Activated CD4-positive, alpha-beta T cell treated with anti-CD3 and anti-CD28 coated beads for 36 hours (primary cell): ENCODE measurements at regions of chr1 and their contacts with region 1.

Region 1: GRCh38 chr1:65235867-65236805 is 73.2 kb upstream of the DNAJC6 start:
- DNase-seq: no peak
- ATAC-seq: no peak
- H3K4me3 Mint-ChIP-seq: no peak overlapping the region
- H3K27ac Mint-ChIP-seq: no peak overlapping the region
- H3K4me1 Mint-ChIP-seq: peaks cover 10% of the 10 kb centered on the region
- H3K27me3 Mint-ChIP-seq: peaks cover 12% of the 10 kb centered on the region

Region 2: DNA sequence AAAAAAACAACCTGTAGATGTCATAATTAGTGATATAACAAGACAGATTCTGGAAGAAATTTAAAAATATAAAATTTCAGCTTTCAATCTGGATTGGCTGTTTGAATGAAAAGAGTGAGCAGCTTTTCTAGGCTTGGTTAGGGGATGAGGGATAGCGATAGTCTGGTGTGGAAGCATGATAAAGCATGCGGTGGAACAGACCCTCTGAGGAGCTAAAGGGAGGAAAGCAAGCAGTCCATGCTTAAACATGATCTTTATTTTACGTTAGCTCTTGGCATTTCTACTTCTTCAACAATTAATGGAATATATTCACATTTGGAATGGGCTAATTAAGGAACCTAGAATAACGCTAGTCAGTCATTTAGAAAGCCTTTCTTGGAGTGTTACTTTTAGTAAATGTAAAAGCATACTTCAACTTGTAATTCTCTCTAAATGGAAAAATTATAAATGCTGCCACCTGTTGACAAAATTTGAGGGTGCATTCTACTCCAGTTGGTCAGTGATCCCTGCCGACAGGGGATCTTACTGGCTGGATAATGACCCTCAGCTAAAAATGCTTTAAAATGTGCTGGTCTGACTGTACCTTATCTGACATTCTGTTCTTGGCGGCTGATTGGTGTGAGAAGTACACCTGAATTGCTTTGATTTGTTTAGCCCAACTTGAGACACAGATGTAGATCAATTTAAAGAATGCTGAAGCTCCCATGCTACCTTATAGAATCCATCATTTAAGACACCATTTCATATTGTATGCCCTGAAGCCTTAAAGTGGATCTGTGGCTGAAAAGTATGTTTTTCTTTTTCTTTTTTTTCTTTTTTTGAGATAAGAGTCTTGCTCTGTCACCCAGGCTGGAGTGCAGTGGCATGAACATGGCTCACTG is 26.9 kb before region 1 on chr1:
- CTCF ChIA-PET with region 1: interaction called, 13 read pairs
- POLR2A ChIA-PET with region 1: interaction called, 4 read pairs
- intact Hi-C with region 1: no loop called
- DNase-seq: peak; percentile 20
- ATAC-seq: no peak
- H3K4me3 Mint-ChIP-seq: no peak overlapping the region
- H3K27ac Mint-ChIP-seq: no peak overlapping the region
- H3K4me1 Mint-ChIP-seq: peaks cover 25% of the 10 kb centered on the region
- H3K27me3 Mint-ChIP-seq: peaks cover 4% of the 10 kb centered on the region

Region 3: GRCh38 chr1:65459397-65459768 is 223.2 kb after region 1 on chr1:
- CTCF ChIA-PET with region 1: interaction called, 12 read pairs
- POLR2A ChIA-PET with region 1: no interaction called
- intact Hi-C with region 1: loop called in 1 of 2 experiments (anchors 1 kb)
- DNase-seq: no peak
- ATAC-seq: peak; percentile 39
- H3K4me3 Mint-ChIP-seq: no peak overlapping the region
- H3K27ac Mint-ChIP-seq: no peak overlapping the region
- H3K4me1 Mint-ChIP-seq: peaks cover 17% of the 10 kb centered on the region
- H3K27me3 Mint-ChIP-seq: no peaks in the 10 kb centered on the region

Region 4: GRCh38 chr1:65581119-65581518 is 345.0 kb after region 1 on chr1:
- CTCF ChIA-PET with region 1: no interaction called
- POLR2A ChIA-PET with region 1: no interaction called
- intact Hi-C with region 1: loop called in 1 of 2 experiments (anchors 5 kb)
- DNase-seq: no peak
- ATAC-seq: no peak
- H3K4me3 Mint-ChIP-seq: no peak overlapping the region
- H3K27ac Mint-ChIP-seq: no peak overlapping the region
- H3K4me1 Mint-ChIP-seq: no peaks in the 10 kb centered on the region
- H3K27me3 Mint-ChIP-seq: peaks cover 3% of the 10 kb centered on the region

Region 5: DNA sequence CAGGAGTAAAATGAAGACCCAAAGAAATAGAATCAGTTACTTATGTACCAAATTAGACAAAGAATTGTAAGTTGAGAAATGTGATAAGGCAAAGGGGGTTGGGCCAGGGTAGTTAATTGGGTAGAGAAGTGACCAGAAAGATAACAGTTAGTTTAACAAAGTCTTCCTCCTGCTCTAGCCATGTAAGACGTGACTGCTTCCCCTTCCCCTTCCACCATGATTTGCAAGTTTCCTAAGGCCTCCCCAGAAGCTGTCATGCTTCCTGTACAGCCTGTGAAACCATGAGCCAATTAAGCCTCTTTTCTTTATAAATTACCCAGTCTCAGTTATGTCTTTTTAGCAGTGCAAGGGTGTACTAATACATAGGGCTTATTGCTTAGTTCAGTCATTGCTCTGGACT is 414.5 kb after region 1 on chr1:
- CTCF ChIA-PET with region 1: no interaction called
- POLR2A ChIA-PET with region 1: no interaction called
- intact Hi-C with region 1: no loop called
- DNase-seq: no peak
- ATAC-seq: no peak
- H3K4me3 Mint-ChIP-seq: no peak overlapping the region
- H3K27ac Mint-ChIP-seq: no peak overlapping the region
- H3K4me1 Mint-ChIP-seq: no peaks in the 10 kb centered on the region
- H3K27me3 Mint-ChIP-seq: peaks cover 8% of the 10 kb centered on the region